Panc1 (cell line): ENCODE measurements at regions of chr2 and their contacts with region 1.

Region 1: GRCh38 chr2:27996156-27996922 is 105.8 kb downstream of the BABAM2 start:
- DNase-seq: no peak
- ATAC-seq: no peak
- H3K4me3 ChIP-seq: no peak overlapping the region
- H3K27ac ChIP-seq: no peak overlapping the region
- H3K4me1 ChIP-seq: no peaks in the 10 kb centered on the region
- H3K27me3 ChIP-seq: no peaks in the 10 kb centered on the region
- CTCF ChIP-seq: no peak

Region 2: GRCh38 chr2:28068088-28068487 is 71.7 kb after region 1 on chr2:
- CTCF ChIA-PET with region 1: interaction called, 15 read pairs
- POLR2A ChIA-PET with region 1: no interaction called
- in situ Hi-C with region 1: no loop called
- intact Hi-C with region 1: no loop called
- DNase-seq: no peak
- ATAC-seq: no peak
- H3K4me3 ChIP-seq: no peak overlapping the region
- H3K27ac ChIP-seq: no peak overlapping the region
- H3K4me1 ChIP-seq: no peaks in the 10 kb centered on the region
- H3K27me3 ChIP-seq: no peaks in the 10 kb centered on the region
- CTCF ChIP-seq: no peak